Activated naive CD4-positive, alpha-beta T cell treated with anti-CD3 and anti-CD28 coated beads for 36 hours (primary cell): ENCODE measurements at regions of chr11 and their contacts with region 1.

Region 1: GRCh38 chr11:119030329-119031049 is at the start of gene SLC37A4:
- DNase-seq: peak; percentile 99
- H3K4me3 Mint-ChIP-seq: peak within 1 kb of the TSS; percentile 77
- H3K27ac Mint-ChIP-seq: peak within 1 kb of the TSS; percentile 85
- H3K4me1 Mint-ChIP-seq: peaks cover 23% of the 10 kb centered on the region
- H3K27me3 Mint-ChIP-seq: no peaks in the 10 kb centered on the region
- total RNA-seq, gene SLC37A4: 28.3 to 30.3 TPM

Region 2: DNA sequence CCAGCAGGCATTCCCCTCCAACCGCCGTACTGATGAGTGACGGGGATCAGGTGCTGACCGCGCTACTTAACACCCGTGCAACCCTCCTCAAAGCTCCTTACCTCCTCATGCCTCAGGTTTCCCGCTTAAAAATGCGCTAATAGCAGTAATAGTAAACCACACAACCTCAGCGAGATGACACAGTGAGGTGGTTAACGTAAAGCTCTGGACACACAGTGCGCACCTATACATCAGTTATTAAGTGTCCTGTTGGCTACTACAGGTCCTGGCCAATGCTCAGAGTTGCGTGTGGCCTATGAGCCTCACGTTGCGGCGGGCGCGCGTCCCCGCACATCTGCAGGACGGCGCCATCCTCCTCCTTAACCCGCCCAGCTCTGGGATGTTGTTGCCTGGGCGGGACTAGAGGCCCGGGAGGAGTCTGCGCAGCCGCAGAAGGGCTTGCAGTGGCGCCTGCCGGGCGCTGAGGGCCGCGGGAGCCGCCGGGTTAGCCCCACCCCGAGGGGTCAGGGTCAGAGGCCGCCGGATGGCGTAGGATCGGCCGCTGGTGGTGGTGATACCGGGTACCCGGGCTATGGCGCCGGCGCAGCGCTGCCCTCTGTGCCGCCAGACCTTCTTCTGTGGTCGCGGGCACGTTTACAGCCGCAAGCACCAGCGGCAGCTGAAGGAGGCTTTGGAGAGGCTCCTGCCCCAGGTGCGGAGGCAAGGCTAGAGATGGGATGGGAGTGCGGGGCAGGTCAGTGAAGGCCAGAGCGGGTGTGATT is 32.7 kb before region 1 on chr11 and contains the start of gene CENATAC:
- CTCF ChIA-PET with region 1: interaction called, 3 read pairs
- intact Hi-C with region 1: loop called (anchors 1 kb)
- DNase-seq: peak; percentile 98
- H3K4me3 Mint-ChIP-seq: peak within 1 kb of the TSS; percentile 88
- H3K27ac Mint-ChIP-seq: peak within 1 kb of the TSS; percentile 96
- H3K4me1 Mint-ChIP-seq: peaks cover 33% of the 10 kb centered on the region
- H3K27me3 Mint-ChIP-seq: no peaks in the 10 kb centered on the region
- total RNA-seq, gene CENATAC: 17.4 to 18.0 TPM

Region 3: GRCh38 chr11:119084663-119085436 is 54.4 kb after region 1 on chr11 and contains the start of gene HMBS:
- CTCF ChIA-PET with region 1: interaction called, 3 read pairs
- intact Hi-C with region 1: loop called (anchors 1 kb)
- DNase-seq: peak; percentile 94
- H3K4me3 Mint-ChIP-seq: peak within 1 kb of the TSS; percentile 98
- H3K27ac Mint-ChIP-seq: peak within 1 kb of the TSS; percentile 96
- H3K4me1 Mint-ChIP-seq: peaks cover 21% of the 10 kb centered on the region
- H3K27me3 Mint-ChIP-seq: no peaks in the 10 kb centered on the region
- total RNA-seq, gene HMBS: 27.9 to 29.4 TPM

Region 4: GRCh38 chr11:119505861-119506260 is 475.4 kb after region 1 on chr11:
- CTCF ChIA-PET with region 1: no interaction called
- intact Hi-C with region 1: no loop called
- DNase-seq: no peak
- H3K4me3 Mint-ChIP-seq: no peak overlapping the region
- H3K27ac Mint-ChIP-seq: no peak overlapping the region
- H3K4me1 Mint-ChIP-seq: peaks cover 17% of the 10 kb centered on the region
- H3K27me3 Mint-ChIP-seq: peaks cover 7% of the 10 kb centered on the region